Activated naive CD8-positive, alpha-beta T cell treated with anti-CD3 and anti-CD28 coated beads, Interleukin-2, amount 10 ng/mL, durations not matched to agents 7 days and 5 days (primary cell): ENCODE measurements at regions of chr4 and their contacts with region 1.

Region 1: DNA sequence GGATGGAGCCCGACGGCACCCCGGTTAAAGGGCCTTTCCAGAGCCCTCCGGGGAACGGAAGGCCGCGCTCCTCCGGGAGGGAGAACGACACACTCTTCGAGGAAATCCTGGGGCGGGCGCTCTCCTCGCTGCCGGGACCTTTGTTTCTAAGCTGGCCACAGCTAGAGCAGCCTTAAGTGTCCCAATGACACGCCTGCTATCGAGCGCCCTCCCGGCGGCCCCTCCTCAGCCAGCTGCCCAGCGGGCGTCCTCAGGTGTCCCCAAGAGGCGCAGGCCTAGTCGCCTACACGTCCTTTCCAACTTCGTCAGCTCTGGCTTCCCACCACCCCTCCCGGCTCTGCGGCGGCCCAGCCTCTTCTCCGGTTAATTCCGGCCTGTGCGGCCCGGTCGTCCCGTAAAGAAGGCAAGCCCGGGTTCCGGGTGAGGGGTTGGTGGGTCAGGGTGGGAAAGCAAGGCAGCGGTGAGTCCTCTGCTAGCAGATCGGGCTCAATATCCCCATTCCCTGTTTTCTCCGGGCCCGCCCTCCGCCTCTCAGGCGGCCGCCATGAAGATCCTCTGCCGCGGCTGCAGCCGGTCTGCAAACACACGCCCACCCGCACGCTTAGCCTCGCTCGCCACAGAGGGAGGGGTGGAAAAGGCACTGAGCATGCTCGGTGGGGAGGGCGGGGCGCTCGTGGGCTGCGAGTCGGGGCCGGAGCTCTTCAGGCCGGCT is 449 bp upstream of the RAP1GDS1 start:
- DNase-seq: peak; percentile 91
- ATAC-seq: peak; percentile 90
- H3K4me3 Mint-ChIP-seq: peak overlapping the region; percentile 95
- H3K27ac Mint-ChIP-seq: peak overlapping the region; percentile 97
- H3K4me1 Mint-ChIP-seq: peaks cover 35% of the 10 kb centered on the region
- H3K27me3 Mint-ChIP-seq: no peaks in the 10 kb centered on the region

Region 2: GRCh38 chr4:98143001-98143899 is 117.5 kb before region 1 on chr4 and contains the start of gene STPG2:
- POLR2A ChIA-PET with region 1: interaction called, 24 read pairs
- DNase-seq: peak; percentile 94
- ATAC-seq: peak; percentile 100
- H3K4me3 Mint-ChIP-seq: peak within 1 kb of the TSS; percentile 91
- H3K27ac Mint-ChIP-seq: peak within 1 kb of the TSS; percentile 97
- H3K4me1 Mint-ChIP-seq: peaks cover 16% of the 10 kb centered on the region
- H3K27me3 Mint-ChIP-seq: no peaks in the 10 kb centered on the region
- total RNA-seq, gene STPG2: not detected

Region 3: DNA sequence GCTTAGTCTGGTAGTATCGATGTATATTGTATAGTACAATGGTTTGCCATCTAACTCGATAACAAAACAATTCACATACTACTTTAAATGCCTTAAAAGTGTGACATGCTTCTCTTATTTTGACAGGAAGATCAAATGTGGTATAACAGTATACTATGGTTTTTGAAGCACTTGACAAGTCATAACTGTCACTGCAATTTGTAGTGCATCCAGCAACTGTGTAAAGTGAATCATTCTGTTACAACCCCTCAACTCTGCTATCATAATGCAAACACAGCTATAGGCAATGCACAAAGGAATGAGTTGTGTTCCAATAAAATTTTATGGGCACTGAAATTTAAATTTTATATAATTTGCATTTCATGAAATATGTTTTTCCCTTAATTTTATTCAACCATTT is 14.4 kb after region 1 on chr4:
- POLR2A ChIA-PET with region 1: interaction called, 10 read pairs
- DNase-seq: no peak
- ATAC-seq: no peak
- H3K4me3 Mint-ChIP-seq: no peak overlapping the region
- H3K27ac Mint-ChIP-seq: no peak overlapping the region
- H3K4me1 Mint-ChIP-seq: peaks cover 8% of the 10 kb centered on the region
- H3K27me3 Mint-ChIP-seq: no peaks in the 10 kb centered on the region

Region 4: DNA sequence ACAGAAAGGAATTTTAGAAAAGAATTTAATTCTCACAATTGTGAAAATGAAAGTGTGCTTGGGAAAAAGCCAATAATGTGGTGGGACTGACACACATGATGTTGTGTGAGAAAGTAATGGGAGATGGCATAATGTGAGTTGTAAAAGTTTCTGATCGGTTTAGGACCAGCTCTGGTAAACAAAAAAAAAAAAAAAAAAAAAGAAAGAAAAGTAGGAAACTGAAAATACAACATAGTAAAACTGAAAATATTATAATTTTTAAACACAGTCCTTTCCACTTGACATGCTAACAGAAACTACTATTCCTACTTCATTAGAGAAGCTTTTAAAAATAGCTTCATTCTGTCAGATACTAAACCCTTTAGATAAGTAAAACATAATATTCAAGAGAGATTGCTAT is 28.6 kb after region 1 on chr4:
- POLR2A ChIA-PET with region 1: interaction called, 10 read pairs
- DNase-seq: no peak
- ATAC-seq: no peak
- H3K4me3 Mint-ChIP-seq: peak overlapping the region; percentile 60
- H3K27ac Mint-ChIP-seq: peak overlapping the region; percentile 52
- H3K4me1 Mint-ChIP-seq: peaks cover 30% of the 10 kb centered on the region
- H3K27me3 Mint-ChIP-seq: no peaks in the 10 kb centered on the region

Region 5: DNA sequence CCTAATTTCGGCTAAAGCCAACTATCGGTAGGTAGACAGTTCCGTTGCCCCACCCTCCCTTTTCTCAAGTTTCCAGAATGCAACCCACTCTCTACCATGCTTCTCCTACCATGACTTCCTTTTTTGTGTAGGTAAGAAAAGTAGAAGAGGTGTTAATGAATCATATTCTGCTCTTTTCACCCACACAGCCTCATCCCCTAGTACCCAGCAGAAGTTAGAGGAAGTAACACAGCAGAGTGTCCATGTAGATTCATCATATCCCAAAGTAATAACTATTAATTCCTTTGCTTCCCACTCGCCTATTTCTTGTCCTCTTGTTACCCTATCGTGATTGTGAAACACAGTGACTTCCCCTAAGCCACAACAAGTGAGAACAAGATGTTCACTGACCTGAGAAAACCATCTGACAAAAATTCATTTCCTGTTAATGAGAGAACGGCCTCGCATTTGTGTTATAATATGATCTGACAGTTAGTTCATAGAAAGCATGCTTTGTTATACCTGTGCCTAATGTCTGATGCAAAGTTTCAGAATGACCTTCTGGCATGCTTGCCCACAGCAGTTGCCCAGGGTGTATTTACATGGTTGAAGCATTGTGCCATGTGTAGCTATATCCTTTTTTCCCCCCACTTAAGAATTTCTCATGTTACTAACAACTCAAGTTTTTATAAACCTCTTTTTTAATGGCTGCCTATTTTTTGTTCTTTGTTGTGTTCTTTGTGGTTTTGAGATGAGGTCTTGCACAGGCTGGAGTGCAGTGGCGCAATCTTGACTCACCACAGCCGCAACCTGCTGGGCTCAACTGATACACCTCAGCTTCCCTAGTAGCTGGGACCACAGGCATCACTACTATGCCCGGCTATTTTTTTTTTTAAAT is 186.0 kb after region 1 on chr4:
- POLR2A ChIA-PET with region 1: interaction called, 27 read pairs
- DNase-seq: peak; percentile 67
- ATAC-seq: peak; percentile 85
- H3K4me3 Mint-ChIP-seq: peak overlapping the region; percentile 67
- H3K27ac Mint-ChIP-seq: peak overlapping the region; percentile 95
- H3K4me1 Mint-ChIP-seq: peaks cover 37% of the 10 kb centered on the region
- H3K27me3 Mint-ChIP-seq: no peaks in the 10 kb centered on the region

Region 6: DNA sequence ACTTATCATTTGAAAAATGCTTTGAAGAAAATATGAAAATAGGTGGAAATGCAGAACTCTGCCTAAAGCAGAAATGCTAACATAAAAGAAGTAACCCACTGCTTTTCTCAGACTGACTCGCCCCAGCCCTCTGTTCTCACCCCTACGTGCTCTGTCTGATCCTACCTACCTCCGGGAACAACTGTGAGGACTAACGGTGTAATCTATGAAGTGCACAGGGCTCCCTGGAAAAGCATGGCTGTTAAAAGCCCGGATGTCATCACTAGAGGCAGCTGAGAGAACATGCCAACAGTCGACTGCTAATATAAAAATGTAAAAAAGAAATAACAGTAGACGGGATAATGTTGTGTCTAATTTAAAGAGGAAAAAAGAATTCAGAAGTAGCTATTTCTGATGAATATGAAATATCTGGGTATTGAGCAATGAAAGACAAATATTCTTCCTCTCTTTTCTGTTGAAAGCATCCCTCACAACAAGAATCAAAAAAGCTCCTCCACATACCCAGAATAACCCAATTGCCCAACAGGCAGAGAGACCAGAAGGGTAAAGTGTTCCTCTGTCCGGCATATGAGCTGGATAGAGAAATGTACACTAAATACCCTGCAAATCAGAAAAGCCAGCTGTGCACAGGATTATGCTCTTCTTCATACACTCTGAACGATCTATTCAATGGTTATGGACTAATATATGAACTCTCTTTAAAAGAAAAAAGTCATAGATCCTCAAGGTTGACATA is 267.0 kb after region 1 on chr4:
- POLR2A ChIA-PET with region 1: no interaction called
- DNase-seq: no peak
- ATAC-seq: no peak
- H3K4me3 Mint-ChIP-seq: no peak overlapping the region
- H3K27ac Mint-ChIP-seq: no peak overlapping the region
- H3K4me1 Mint-ChIP-seq: peaks cover 8% of the 10 kb centered on the region
- H3K27me3 Mint-ChIP-seq: no peaks in the 10 kb centered on the region

Region 7: DNA sequence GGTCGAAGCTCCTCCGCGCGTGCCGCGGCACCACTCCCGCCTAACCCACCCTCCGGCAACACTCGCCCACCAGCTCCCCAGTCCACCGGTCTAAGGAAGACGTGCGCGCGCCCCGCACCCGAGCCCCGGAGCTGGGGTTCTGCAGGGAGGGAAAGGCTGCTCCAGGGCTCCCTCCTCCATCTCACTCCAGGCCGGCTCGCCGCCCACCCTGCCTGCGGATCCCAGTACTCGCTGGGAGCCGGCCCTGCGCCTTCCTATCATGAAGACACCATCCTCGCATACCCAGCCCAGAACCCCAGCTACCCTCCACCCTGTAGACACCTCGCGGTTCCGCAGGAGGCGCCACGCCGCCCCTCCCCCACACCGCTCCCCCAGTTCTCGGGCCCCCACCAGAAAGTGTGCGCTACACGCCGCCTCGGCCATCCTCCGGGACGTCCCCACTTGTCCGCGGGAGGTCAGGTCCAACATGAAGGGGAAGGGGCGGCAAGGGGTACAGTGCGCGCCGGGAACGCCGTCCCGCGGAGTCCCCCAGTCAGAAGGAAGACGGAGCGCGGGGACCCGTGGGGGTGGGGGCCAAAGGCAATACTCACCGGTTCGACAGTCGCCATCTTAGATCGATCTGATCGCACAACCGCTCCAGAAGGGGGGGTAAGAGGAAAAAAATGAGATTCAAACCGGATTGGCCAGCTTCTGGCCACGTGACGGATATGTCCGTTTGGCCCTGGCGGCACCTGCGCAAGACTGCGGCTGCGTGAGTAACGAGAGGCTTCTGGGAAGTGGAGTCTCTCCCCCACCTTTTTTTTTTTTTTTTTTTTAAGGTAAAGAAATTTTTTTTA is 668.0 kb after region 1 on chr4 and contains the start of gene EIF4E:
- POLR2A ChIA-PET with region 1: interaction called, 14 read pairs
- DNase-seq: peak; percentile 89
- ATAC-seq: peak; percentile 81
- H3K4me3 Mint-ChIP-seq: peak within 1 kb of the TSS; percentile 97
- H3K27ac Mint-ChIP-seq: peak within 1 kb of the TSS; percentile 98
- H3K4me1 Mint-ChIP-seq: peaks cover 20% of the 10 kb centered on the region
- H3K27me3 Mint-ChIP-seq: no peaks in the 10 kb centered on the region
- total RNA-seq, gene EIF4E: 77.5 to 88.6 TPM

Region 8: GRCh38 chr4:99088481-99089365 is 828.0 kb after region 1 on chr4 and contains the start of gene ADH5:
- POLR2A ChIA-PET with region 1: interaction called, 11 read pairs
- DNase-seq: peak; percentile 89
- ATAC-seq: peak; percentile 97
- H3K4me3 Mint-ChIP-seq: peak within 1 kb of the TSS; percentile 95
- H3K27ac Mint-ChIP-seq: peak within 1 kb of the TSS; percentile 98
- H3K4me1 Mint-ChIP-seq: peaks cover 29% of the 10 kb centered on the region
- H3K27me3 Mint-ChIP-seq: no peaks in the 10 kb centered on the region
- total RNA-seq, gene ADH5: 97.1 to 103 TPM